ENCODE measurements at regions of chr5 and their contacts with region 1.

Region 1: DNA sequence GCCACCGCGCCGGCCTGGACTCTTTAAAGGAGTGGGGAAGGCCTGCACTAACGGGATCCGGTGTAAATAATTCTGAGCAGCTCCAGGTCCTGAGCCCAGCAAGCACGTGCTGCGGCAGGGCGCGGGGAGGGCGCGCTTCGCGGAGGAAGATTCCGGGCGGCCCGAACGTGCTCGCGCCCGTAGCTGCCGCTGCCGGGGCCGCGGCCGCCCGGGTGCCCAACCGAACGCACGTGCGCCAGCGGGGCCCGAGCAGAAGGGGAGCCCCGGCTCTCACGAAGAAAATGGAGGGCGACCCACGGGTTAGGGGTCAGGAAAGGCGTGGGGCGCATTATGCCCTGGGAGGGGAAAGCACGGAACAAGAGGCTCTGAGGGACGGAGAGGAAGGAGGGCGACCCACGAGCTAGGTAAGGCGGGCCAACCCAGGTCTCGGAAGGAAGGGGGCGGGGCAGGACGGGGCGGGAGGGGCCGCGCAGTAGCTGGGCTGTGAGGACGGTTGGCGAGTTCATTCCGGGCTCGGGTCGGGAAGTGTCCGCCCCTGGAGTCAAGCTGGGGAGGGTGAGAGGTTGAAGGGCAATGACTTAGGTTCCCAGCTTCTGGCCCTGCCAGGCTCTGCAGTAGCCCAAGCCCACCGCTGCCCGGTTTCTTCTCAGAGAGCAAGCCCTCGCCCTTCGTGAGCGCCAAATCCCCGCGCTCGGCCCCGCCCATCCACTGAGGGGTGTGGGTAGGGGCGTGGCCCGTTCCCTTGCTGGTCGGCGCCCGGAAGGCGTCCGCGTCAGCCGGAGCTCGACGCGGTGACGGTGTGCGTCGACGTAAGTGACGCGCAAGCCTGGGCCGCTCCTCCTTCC is at the start of gene ZNF131:
- DNase-seq: peak; percentile 93 to 99 (median 97)
- ATAC-seq: peak; percentile 87 to 92 (median 89)
- H3K4me3 ChIP-seq: peak within 1 kb of the TSS; percentile 78 to 80
- H3K4me3 Mint-ChIP-seq: peak within 1 kb of the TSS; percentile 86 to 92 (median 90)
- H3K27ac ChIP-seq: peak within 1 kb of the TSS; percentile 90
- H3K27ac Mint-ChIP-seq: peak within 1 kb of the TSS; percentile 89 to 91
- H3K4me1 ChIP-seq: peaks cover 25 to 30% of the 10 kb centered on the region in 2 experiments
- H3K4me1 Mint-ChIP-seq: peaks cover 31 to 39% (median 34%) of the 10 kb centered on the region in 3 donors
- H3K27me3 ChIP-seq: no peaks in the 10 kb centered on the region
- H3K27me3 Mint-ChIP-seq: no peaks in the 10 kb centered on the region
- total RNA-seq, gene ZNF131: 62.0 to 71.9 (median 67.5) TPM

Region 2: GRCh38 chr5:42908509-42909488 is 212.1 kb before region 1 on chr5:
- CTCF ChIA-PET with region 1: interaction called in 1 of 2 experiments, 19 read pairs
- POLR2A ChIA-PET with region 1: no interaction called
- DNase-seq: peak; percentile 76 to 96 (median 87)
- ATAC-seq: peak; percentile 88 to 94 (median 92)
- H3K4me3 ChIP-seq: peak overlapping the region; percentile 56 to 61
- H3K4me3 Mint-ChIP-seq: peak overlapping the region; percentile 88 to 98 (median 91)
- H3K27ac ChIP-seq: peak overlapping the region; percentile 38
- H3K27ac Mint-ChIP-seq: peak overlapping the region; percentile 87 to 97
- H3K4me1 ChIP-seq: peaks cover 0 to 12% of the 10 kb centered on the region in 2 experiments
- H3K4me1 Mint-ChIP-seq: peaks cover 11 to 17% (median 16%) of the 10 kb centered on the region in 3 donors
- H3K27me3 ChIP-seq: peaks cover 0 to 3% of the 10 kb centered on the region in 2 experiments
- H3K27me3 Mint-ChIP-seq: peaks cover 3 to 7% of the 10 kb centered on the region in 2 donors

Region 3: GRCh38 chr5:42994246-42995151 is 126.4 kb before region 1 on chr5:
- CTCF ChIA-PET with region 1: interaction called in 1 of 2 experiments, 7 read pairs
- POLR2A ChIA-PET with region 1: interaction called in 1 of 2 experiments, 10 read pairs
- DNase-seq: peak; percentile 73 to 91 (median 82)
- ATAC-seq: peak; percentile 62 to 72 (median 66)
- H3K4me3 ChIP-seq: peak overlapping the region; percentile 83 to 95
- H3K4me3 Mint-ChIP-seq: peak overlapping the region; percentile 99 to 100 (median 100)
- H3K27ac ChIP-seq: peak overlapping the region; percentile 89
- H3K27ac Mint-ChIP-seq: peak overlapping the region; percentile 100
- H3K4me1 ChIP-seq: peaks cover 22 to 32% of the 10 kb centered on the region in 2 experiments
- H3K4me1 Mint-ChIP-seq: peaks cover 29 to 37% (median 35%) of the 10 kb centered on the region in 3 donors
- H3K27me3 ChIP-seq: no peaks in the 10 kb centered on the region
- H3K27me3 Mint-ChIP-seq: no peaks in the 10 kb centered on the region

Region 4: DNA sequence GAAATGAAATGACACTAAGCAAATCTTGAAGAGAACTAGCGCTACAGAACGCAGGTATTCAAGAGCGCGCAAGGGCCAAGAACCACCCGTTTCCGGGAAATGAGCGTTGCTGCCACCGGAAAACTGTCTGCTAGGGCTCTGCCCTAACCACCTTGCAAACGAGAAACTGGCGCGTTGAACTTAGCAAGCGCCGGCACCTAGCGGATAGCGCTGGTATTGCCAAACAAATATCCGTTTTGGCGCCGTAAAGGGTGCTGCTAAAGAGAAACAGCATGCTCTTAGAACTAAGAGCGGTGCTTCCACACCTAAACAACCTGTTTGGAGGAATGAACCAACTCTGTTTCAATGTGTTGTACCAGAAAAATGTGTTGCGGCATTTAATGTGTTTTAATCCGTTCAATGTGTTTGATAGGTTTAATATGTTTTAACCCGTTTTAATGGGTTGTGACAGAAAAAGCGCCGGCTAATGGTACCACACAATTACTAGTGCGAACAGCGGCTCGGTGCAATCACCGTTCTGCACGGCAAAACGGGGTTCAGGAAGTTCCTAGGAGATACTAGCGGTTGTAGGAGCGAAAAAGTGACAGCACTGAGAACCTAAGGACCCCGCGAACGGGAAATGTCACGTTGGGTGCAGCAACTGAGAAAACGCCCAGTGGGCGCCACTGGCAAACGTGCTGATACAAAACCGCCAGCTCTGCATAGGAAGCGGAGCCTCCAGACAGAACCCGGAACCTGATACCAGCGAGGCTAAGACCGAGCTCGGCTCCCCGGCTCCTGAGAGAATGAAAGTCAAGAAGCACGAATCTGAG is 80.4 kb before region 1 on chr5 and contains the start of gene ANXA2R:
- CTCF ChIA-PET with region 1: interaction called in 1 of 2 experiments, 11 read pairs
- POLR2A ChIA-PET with region 1: interaction called in 1 of 2 experiments, 25 read pairs
- DNase-seq: peak; percentile 86 to 97 (median 95)
- ATAC-seq: peak; percentile 59 to 71 (median 63)
- H3K4me3 ChIP-seq: peak within 1 kb of the TSS; percentile 82 to 99
- H3K4me3 Mint-ChIP-seq: peak within 1 kb of the TSS; percentile 93 to 100 (median 95)
- H3K27ac ChIP-seq: peak within 1 kb of the TSS; percentile 98
- H3K27ac Mint-ChIP-seq: peak within 1 kb of the TSS; percentile 98 to 99
- H3K4me1 ChIP-seq: peaks cover 15 to 67% of the 10 kb centered on the region in 2 experiments
- H3K4me1 Mint-ChIP-seq: peaks cover 48 to 61% (median 48%) of the 10 kb centered on the region in 3 donors
- H3K27me3 ChIP-seq: no peaks in the 10 kb centered on the region
- H3K27me3 Mint-ChIP-seq: no peaks in the 10 kb centered on the region
- total RNA-seq, gene ANXA2R: 47.8 to 64.1 (median 53.1) TPM

Region 5: GRCh38 chr5:43110606-43111442 is 10.1 kb before region 1 on chr5:
- CTCF ChIA-PET with region 1: interaction called, 21 to 109 read pairs
- POLR2A ChIA-PET with region 1: interaction called, 4 to 11 read pairs
- DNase-seq: peak in 27 of 35 experiments; percentile 5 to 63 (median 17)
- ATAC-seq: peak; percentile 73 to 83 (median 76)
- H3K4me3 ChIP-seq: no peak overlapping the region
- H3K4me3 Mint-ChIP-seq: peak overlapping the region; percentile 46 to 50 (median 49)
- H3K27ac ChIP-seq: peak overlapping the region; percentile 54
- H3K27ac Mint-ChIP-seq: peak overlapping the region; percentile 88 to 91
- H3K4me1 ChIP-seq: peaks cover 15 to 21% of the 10 kb centered on the region in 2 experiments
- H3K4me1 Mint-ChIP-seq: peaks cover 28 to 31% (median 30%) of the 10 kb centered on the region in 3 donors
- H3K27me3 ChIP-seq: no peaks in the 10 kb centered on the region
- H3K27me3 Mint-ChIP-seq: no peaks in the 10 kb centered on the region

Region 6: GRCh38 chr5:43313035-43313853 is 192.3 kb after region 1 on chr5 and contains the start of gene HMGCS1:
- CTCF ChIA-PET with region 1: interaction called in 1 of 2 experiments, 21 read pairs
- POLR2A ChIA-PET with region 1: interaction called in 1 of 2 experiments, 12 read pairs
- DNase-seq: peak; percentile 96 to 100 (median 99)
- ATAC-seq: peak; percentile 89 to 92 (median 90)
- H3K4me3 ChIP-seq: peak within 1 kb of the TSS; percentile 81 to 88
- H3K4me3 Mint-ChIP-seq: peak within 1 kb of the TSS; percentile 93 to 95 (median 93)
- H3K27ac ChIP-seq: peak within 1 kb of the TSS; percentile 95
- H3K27ac Mint-ChIP-seq: peak within 1 kb of the TSS; percentile 84 to 97
- H3K4me1 ChIP-seq: peaks cover 12 to 14% of the 10 kb centered on the region in 2 experiments
- H3K4me1 Mint-ChIP-seq: peaks cover 27 to 48% (median 41%) of the 10 kb centered on the region in 3 donors
- H3K27me3 ChIP-seq: no peaks in the 10 kb centered on the region
- H3K27me3 Mint-ChIP-seq: no peaks in the 10 kb centered on the region
- total RNA-seq, gene HMGCS1: 29.2 to 49.1 (median 36.2) TPM

Region 7: GRCh38 chr5:43693411-43693810 is 572.5 kb after region 1 on chr5:
- CTCF ChIA-PET with region 1: no interaction called
- POLR2A ChIA-PET with region 1: no interaction called
- DNase-seq: no peak
- ATAC-seq: no peak
- H3K4me3 ChIP-seq: no peak overlapping the region
- H3K4me3 Mint-ChIP-seq: no peak overlapping the region
- H3K27ac ChIP-seq: no peak overlapping the region
- H3K27ac Mint-ChIP-seq: no peak overlapping the region
- H3K4me1 ChIP-seq: no peaks in the 10 kb centered on the region
- H3K4me1 Mint-ChIP-seq: peaks cover 14 to 19% (median 14%) of the 10 kb centered on the region in 3 donors
- H3K27me3 ChIP-seq: no peaks in the 10 kb centered on the region
- H3K27me3 Mint-ChIP-seq: no peaks in the 10 kb centered on the region

Measured in T-cell (primary cell).